ENCODE measurements at regions of chr7 and their contacts with region 1.

Region 1: DNA sequence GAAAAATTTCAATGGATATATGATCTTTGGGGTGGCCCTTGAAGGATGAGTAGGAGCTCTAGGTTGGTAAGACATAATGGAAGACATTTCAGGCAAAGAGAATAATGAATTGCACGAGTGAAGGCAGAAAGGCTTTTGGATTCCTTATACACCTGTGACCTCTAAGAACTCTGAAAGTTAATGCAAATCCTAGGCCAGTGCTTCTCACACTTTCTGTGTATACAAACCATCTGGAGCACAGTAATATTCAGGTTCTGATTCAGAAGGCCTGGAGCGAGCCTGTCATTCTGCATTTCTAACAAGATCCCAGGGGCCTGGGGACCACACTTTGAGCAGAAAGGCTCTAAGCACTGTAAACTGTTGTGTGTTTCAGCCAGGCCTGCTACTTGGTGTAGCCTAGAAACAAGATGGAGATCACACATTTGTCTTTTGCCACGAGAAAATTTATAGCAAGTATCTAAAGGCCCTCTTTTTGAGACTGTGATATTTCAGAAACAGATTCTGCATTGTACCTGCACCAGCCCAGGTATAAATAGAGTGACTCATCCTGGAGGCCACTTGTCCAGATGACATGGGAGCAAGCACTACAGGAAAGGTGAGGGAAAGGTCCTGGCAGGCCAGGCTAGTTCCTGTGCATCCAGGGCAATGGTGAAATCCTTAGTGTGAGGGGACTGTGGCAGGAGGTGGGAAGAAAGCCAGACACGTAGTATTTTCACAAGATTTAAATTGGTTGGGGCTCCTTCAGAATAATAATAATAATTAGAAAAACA is 24.4 kb downstream of the MRPS33 start:
- DNase-seq: no peak
- CTCF ChIP-seq: no peak

Region 2: DNA sequence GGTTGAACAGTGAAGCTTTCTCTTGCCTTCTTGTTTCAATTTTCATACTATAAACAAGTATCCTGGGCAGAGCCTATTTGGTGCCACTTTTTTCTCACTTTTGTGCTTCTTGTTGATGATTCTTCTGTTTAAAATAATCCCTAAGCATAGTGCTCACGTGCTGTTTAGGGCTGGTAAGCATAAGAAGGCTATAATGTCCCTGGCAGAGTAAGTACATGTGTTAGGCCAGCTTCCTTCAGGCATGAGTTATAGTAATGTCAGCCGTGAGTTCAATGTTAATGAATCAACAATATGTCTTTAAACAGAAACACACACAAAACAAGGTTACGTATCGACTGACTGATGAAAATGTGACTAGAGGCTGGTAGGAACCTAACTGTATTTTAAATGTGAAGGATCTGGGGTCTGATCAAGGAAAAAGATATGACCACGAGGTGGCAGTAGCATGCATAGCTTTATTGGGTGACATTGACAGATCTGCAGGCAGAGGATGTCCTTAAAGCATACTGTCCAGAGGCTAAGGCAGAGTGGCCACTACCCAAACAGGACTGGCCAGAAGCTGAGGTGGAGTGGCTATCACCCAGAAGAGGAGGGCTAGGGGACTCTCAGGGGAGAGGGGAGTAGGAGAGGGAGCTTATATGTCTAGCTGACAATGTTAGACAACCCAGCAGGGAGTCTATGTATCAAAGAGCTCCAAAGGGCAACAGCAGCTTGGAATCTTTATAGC is 179.4 kb before region 1 on chr7:
- in situ Hi-C with region 1: loop called (anchors 10 kb)
- DNase-seq: peak; percentile 42
- CTCF ChIP-seq: peak; percentile 72

Measured in GM13977 (cell line).